Mammary epithelial cell (primary cell): ENCODE measurements at regions of chr3 and their contacts with region 1.

Region 1: DNA sequence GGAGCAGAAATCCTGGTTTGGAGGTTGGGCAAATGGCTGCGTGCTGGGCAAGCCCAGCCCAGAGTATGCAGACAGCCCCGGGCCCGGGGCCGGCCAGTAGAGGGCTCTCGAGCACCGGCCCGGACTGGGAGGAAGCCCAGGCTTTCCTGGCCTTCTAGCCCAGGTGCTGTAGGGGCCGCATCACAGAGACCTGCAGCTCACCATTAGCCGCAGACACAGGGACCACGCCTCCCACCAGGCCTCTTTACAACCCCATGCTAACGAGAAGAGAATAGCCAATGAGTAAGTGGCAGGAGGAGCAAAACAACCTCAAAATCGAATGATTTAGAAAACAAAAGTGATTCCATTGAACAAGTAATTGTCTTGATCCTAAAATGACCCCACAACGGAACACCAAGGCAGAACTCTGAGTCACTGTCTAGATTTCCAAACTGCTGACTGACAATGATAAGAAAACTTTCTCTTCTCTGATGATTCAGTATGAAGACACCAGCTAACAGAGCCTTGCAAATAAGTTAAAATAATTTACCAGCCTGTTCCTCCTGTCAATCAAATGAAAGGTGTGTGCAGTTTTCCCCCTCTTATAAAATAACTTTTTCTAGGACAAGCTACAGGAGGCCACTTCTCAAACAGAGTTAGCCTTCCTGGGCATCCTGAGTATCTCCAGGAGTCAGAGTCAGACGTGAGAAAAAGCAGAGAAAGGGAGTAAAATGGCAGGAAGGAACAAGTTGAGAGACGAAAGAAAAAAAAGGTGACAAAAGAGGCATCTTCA is 102.2 kb downstream of the DGKG start:
- DNase-seq: peak; percentile 84
- H3K4me3 ChIP-seq: peak overlapping the region in 2 of 3 experiments; percentile 2 to 27
- H3K27ac ChIP-seq: no peak overlapping the region
- H3K4me1 ChIP-seq: peaks cover 25% of the 10 kb centered on the region
- H3K27me3 ChIP-seq: no peaks in the 10 kb centered on the region
- CTCF ChIP-seq: peak; percentile 67 to 96

Region 2: GRCh38 chr3:186124592-186124991 is 135.2 kb before region 1 on chr3:
- CTCF ChIA-PET with region 1: no interaction called
- dilution Hi-C with region 1: no loop called
- in situ Hi-C with region 1: no loop called
- intact Hi-C with region 1: no loop called
- DNase-seq: no peak
- H3K4me3 ChIP-seq: no peak overlapping the region
- H3K27ac ChIP-seq: no peak overlapping the region
- H3K4me1 ChIP-seq: peaks cover 9% of the 10 kb centered on the region
- H3K27me3 ChIP-seq: no peaks in the 10 kb centered on the region
- CTCF ChIP-seq: no peak

Region 3: DNA sequence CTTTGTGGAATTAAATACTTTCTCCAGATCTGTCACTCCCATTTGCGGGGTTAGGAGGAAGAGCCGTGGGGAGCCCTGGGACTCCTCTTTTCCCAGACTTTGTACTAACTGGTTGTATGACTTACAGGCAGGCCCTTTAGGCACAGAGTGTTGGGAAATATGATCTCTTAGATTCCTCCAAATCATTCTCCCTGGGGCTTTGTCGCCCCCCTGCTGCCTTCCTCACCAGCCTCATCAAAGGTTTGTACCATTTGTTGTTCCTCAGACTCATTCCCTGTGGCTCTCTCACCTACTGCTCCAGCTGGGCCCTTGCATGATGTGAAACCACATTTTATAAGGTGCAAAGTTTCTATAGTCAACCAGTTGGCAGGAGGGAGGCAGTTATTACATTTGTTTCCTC is 228.0 kb after region 1 on chr3:
- CTCF ChIA-PET with region 1: no interaction called
- dilution Hi-C with region 1: no loop called
- in situ Hi-C with region 1: no loop called
- intact Hi-C with region 1: loop called (anchors 1 kb)
- DNase-seq: no peak
- H3K4me3 ChIP-seq: no peak overlapping the region
- H3K27ac ChIP-seq: no peak overlapping the region
- H3K4me1 ChIP-seq: no peaks in the 10 kb centered on the region
- H3K27me3 ChIP-seq: no peaks in the 10 kb centered on the region
- CTCF ChIP-seq: no peak

Region 4: DNA sequence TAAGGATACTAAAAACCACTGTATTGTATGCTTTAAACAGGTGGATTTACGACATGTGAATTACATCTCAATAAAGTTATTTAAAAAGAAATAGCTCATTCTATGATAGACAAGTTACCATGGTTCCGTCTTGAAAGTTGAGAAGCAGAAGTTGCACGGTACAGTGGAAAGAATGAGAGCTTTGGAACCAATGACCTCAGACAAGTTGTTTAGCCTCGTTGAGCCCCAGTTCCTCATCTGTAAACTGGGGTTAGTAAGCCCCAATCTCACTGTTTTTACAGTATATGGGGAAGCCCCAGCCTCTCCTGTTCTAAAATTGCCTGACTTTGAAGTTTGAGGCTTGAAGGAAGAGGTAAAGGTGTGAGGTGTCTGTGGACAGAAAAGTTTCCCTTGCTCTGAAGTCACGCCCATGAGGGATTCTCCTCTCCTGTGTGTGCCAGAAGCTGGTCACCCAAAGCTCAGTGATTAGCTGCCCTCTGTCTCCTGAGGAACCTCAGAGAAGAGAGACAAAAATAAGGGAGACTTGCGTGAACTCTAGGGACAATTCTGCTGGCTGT is 274.4 kb after region 1 on chr3:
- CTCF ChIA-PET with region 1: interaction called, 5 read pairs
- dilution Hi-C with region 1: no loop called
- in situ Hi-C with region 1: loop called in 1 of 2 experiments (anchors 5 kb)
- intact Hi-C with region 1: no loop called
- DNase-seq: no peak
- H3K4me3 ChIP-seq: no peak overlapping the region
- H3K27ac ChIP-seq: no peak overlapping the region
- H3K4me1 ChIP-seq: no peaks in the 10 kb centered on the region
- H3K27me3 ChIP-seq: no peaks in the 10 kb centered on the region
- CTCF ChIP-seq: no peak

Region 5: GRCh38 chr3:186540221-186540834 is 280.5 kb after region 1 on chr3:
- CTCF ChIA-PET with region 1: interaction called, 6 read pairs
- dilution Hi-C with region 1: no loop called
- in situ Hi-C with region 1: loop called (anchors 5 kb)
- intact Hi-C with region 1: loop called (anchors 1 kb)
- DNase-seq: peak; percentile 78
- H3K4me3 ChIP-seq: no peak overlapping the region
- H3K27ac ChIP-seq: peak overlapping the region; percentile 4
- H3K4me1 ChIP-seq: peaks cover 17% of the 10 kb centered on the region
- H3K27me3 ChIP-seq: no peaks in the 10 kb centered on the region
- CTCF ChIP-seq: peak; percentile 64 to 66

Region 6: GRCh38 chr3:186806089-186807055 is 546.6 kb after region 1 on chr3 and contains the start of gene RFC4:
- CTCF ChIA-PET with region 1: no interaction called
- dilution Hi-C with region 1: no loop called
- in situ Hi-C with region 1: no loop called
- intact Hi-C with region 1: loop called (anchors 5 kb)
- DNase-seq: peak; percentile 74
- H3K4me3 ChIP-seq: peak within 1 kb of the TSS; percentile 65 to 87 (median 71)
- H3K27ac ChIP-seq: peak within 1 kb of the TSS; percentile 72
- H3K4me1 ChIP-seq: peaks cover 16% of the 10 kb centered on the region
- H3K27me3 ChIP-seq: no peaks in the 10 kb centered on the region
- CTCF ChIP-seq: no peak
- total RNA-seq, gene RFC4: 12.3 to 27.5 TPM

Region 7: DNA sequence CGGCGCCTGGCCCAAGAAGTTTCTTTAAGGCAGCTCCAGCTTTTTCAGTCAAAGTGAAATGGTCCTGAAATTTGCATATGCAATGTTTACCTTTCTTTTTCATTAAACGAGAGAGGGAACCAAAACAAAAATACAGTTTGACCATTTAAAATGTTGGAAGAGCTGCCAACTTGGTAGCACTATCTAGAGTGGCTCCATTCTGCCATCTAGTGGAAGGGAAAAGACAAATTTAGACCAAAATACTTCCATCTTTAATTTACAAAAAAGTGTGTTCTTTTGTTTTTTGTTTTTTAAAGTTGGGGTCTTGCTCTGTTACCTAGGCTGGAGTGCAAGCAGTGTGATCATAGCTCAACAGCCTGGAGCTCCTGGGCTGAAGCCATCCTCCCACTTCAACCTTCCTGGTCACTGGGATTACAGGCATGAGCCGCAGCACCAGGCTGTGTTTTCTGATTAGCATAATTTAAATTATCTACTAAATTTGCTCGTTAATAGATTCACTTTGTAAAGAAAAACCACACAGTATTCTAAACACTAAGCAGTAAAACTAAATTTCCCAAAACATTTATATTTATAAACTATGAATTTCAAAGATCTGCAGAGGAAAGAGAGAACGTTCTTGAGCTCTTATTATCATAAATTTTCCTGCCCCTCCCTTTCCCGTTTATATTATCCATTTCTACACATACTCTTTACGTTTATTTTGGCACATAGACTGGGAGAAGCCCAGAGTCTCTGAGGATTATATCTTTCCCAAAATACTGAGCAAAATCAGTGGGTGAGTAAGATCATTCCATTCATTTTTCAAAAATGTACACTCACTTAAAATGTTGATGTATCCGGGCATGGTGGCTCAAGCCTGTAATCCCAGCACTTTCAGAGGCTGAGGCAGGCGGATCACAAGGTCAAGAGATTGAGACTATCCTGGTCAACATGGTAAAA is 561.9 kb after region 1 on chr3:
- CTCF ChIA-PET with region 1: no interaction called
- dilution Hi-C with region 1: no loop called
- in situ Hi-C with region 1: no loop called
- intact Hi-C with region 1: loop called (anchors 5 kb)
- DNase-seq: peak; percentile 24
- H3K4me3 ChIP-seq: no peak overlapping the region
- H3K27ac ChIP-seq: no peak overlapping the region
- H3K4me1 ChIP-seq: peaks cover 7% of the 10 kb centered on the region
- H3K27me3 ChIP-seq: no peaks in the 10 kb centered on the region
- CTCF ChIP-seq: peak; percentile 39 to 70